IMR-90 (cell line): ENCODE measurements at regions of chr5 and their contacts with region 1.

Region 1: GRCh38 chr5:82811490-82811889 is 265.7 kb downstream of the TMEM167A start:
- DNase-seq: no peak
- ATAC-seq: no peak
- H3K4me3 ChIP-seq: no peak overlapping the region
- H3K27ac ChIP-seq: no peak overlapping the region
- H3K4me1 ChIP-seq: peaks cover 2% of the 10 kb centered on the region
- H3K27me3 ChIP-seq: no peaks in the 10 kb centered on the region
- CTCF ChIP-seq: no peak
- POLR2A ChIP-seq: no peak
- RAD21 ChIP-seq: no peak

Region 2: GRCh38 chr5:82538339-82539034 is 273.0 kb before region 1 on chr5:
- CTCF ChIA-PET with region 1: no interaction called
- POLR2A ChIA-PET with region 1: interaction called, 20 read pairs
- dilution Hi-C with region 1: no loop called
- in situ Hi-C with region 1: no loop called
- intact Hi-C with region 1: no loop called
- DNase-seq: no peak
- ATAC-seq: no peak
- H3K4me3 ChIP-seq: no peak overlapping the region
- H3K27ac ChIP-seq: no peak overlapping the region
- H3K4me1 ChIP-seq: no peaks in the 10 kb centered on the region
- H3K27me3 ChIP-seq: no peaks in the 10 kb centered on the region; the same call in 1 of the 2 replicates
- CTCF ChIP-seq: no peak
- POLR2A ChIP-seq: no peak
- RAD21 ChIP-seq: no peak

Region 3: GRCh38 chr5:83777856-83778255 is 966.4 kb after region 1 on chr5:
- CTCF ChIA-PET with region 1: no interaction called
- POLR2A ChIA-PET with region 1: no interaction called
- dilution Hi-C with region 1: no loop called
- in situ Hi-C with region 1: no loop called
- intact Hi-C with region 1: no loop called
- DNase-seq: no peak
- ATAC-seq: no peak
- H3K4me3 ChIP-seq: no peak overlapping the region
- H3K27ac ChIP-seq: no peak overlapping the region
- H3K4me1 ChIP-seq: no peaks in the 10 kb centered on the region
- H3K27me3 ChIP-seq: no peaks in the 10 kb centered on the region
- CTCF ChIP-seq: no peak
- POLR2A ChIP-seq: no peak
- RAD21 ChIP-seq: no peak